PC-9 (cell line): ENCODE measurements at regions of chr5 and their contacts with region 1.

Region 1: DNA sequence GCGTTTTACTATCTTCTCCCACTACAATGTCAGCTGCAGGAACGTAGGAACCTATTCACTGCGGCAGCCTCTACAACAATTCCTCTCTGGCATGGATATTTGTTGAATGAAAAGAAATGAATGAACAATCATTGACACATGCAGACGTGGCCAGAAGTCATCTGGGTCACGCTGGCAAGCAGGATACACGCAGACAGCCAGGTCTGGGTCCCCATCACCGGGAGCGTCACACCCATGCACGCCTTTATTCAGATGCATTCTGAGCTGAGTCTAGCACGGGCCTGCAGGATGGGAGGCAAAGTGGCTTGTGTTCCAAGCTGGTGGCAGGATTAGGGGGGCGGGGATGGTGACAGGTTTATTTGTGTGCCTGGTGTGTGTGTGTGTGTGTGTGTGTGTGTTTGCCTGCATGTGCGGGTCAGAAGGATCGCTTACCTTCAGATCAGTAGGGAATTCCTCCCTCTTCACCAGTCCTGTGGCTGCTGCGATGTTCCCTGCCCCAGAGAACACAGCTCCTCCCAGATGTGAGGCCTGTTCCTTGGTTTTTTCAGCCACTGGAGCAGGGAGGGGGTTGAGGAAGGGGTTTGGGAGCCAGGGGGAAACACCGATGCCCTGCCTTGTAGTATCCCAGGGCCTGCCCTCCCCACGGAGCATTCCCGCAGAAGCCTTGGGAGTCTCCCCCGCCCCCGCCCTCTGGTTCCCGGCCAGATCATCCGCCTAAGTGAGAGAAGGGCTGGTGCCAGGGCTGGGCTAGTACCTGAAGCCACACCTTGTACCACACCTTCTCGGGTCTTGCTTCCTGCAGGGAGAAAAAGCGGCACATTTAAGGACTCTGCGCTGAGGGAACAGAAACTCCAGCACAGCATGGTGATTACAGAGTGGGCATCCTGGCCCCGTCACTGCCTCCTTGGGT is 4.1 kb downstream of the SNCB start:
- DNase-seq: no peak
- H3K4me3 ChIP-seq: no peak overlapping the region
- H3K27ac ChIP-seq: no peak overlapping the region
- H3K4me1 ChIP-seq: no peaks in the 10 kb centered on the region
- H3K27me3 ChIP-seq: peaks cover 22% of the 10 kb centered on the region
- CTCF ChIP-seq: no peak

Region 2: GRCh38 chr5:176519810-176520720 is 106.2 kb before region 1 on chr5:
- CTCF ChIA-PET with region 1: interaction called, 14 read pairs
- POLR2A ChIA-PET with region 1: no interaction called
- intact Hi-C with region 1: no loop called
- DNase-seq: no peak
- H3K4me3 ChIP-seq: no peak overlapping the region
- H3K27ac ChIP-seq: no peak overlapping the region
- H3K4me1 ChIP-seq: peaks cover 8% of the 10 kb centered on the region
- H3K27me3 ChIP-seq: no peaks in the 10 kb centered on the region
- CTCF ChIP-seq: no peak